Dorsolateral prefrontal cortex (tissue), 120 donors: ENCODE measurements at regions of chr13 and their contacts with region 1.

Region 1: GRCh38 chr13:49996951-49997895 is at the start of gene TRIM13:
- DNase-seq: peak; percentile 84 to 93 (median 90)
- H3K4me3 ChIP-seq: peak within 1 kb of the TSS; percentile 69 to 98 (median 87)
- H3K27ac ChIP-seq: peak within 1 kb of the TSS; percentile 91 to 100 (median 99)
- H3K27me3 ChIP-seq: no peaks in the 10 kb centered on the region
- CTCF ChIP-seq: peak; percentile 51 to 92 (median 82)
- total RNA-seq, gene TRIM13: 17.3 to 34.5 (median 23.6) TPM

Region 2: GRCh38 chr13:49733181-49733951 is 263.9 kb before region 1 on chr13:
- intact Hi-C with region 1: no loop called
- DNase-seq: no peak
- H3K4me3 ChIP-seq: no peak overlapping the region
- H3K27ac ChIP-seq: no peak overlapping the region
- H3K27me3 ChIP-seq: no peaks in the 10 kb centered on the region
- CTCF ChIP-seq: no peak

Region 3: DNA sequence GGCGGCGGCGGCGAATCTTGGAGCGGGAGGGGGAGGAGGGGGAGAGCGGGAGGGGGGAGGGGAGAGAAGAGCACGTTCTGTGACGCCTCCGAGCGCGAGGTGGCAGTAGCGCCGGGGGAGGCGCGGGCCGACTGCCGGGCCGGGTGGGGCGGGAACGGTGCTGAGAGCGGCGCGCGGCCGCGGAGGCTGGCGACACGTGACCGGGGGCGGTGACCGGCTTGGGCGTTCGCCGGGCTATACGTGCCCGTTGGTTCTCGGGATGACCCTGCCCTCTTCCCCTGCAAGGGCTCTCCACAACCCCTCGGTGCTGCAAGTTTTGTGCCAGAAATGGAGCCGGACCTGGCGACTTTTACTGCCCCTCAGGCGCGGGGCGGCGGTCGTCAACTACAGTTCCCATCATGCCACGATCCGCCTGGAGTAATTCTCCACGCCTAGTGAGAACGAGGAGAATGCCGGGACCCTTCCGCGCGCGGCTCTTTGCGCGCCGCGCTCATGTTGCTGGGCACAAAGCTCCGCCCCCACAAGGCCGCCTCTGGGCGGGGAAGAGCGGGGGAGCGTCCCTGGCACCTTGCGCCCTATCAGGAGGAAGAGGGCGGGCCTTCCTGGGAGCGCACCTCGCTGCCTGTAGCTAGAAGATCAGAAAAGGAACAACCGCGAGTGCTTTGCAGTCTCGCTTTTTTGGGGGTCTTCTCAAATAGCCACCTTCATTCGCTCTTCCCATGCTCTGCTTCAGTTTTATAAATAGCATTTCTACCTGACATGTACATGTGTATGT is 204.5 kb before region 1 on chr13 and contains the start of gene KPNA3:
- intact Hi-C with region 1: loop called in 1 of 2 experiments (anchors 10 kb)
- DNase-seq: peak; percentile 90 to 98 (median 96)
- H3K4me3 ChIP-seq: peak within 1 kb of the TSS; percentile 70 to 99 (median 86)
- H3K27ac ChIP-seq: peak within 1 kb of the TSS; percentile 80 to 98 (median 95)
- H3K27me3 ChIP-seq: no peaks in the 10 kb centered on the region
- CTCF ChIP-seq: peak in 49 of 56 donors; percentile 15 to 64 (median 41)
- total RNA-seq, gene KPNA3: 25.3 to 46.1 (median 35.7) TPM

Region 4: DNA sequence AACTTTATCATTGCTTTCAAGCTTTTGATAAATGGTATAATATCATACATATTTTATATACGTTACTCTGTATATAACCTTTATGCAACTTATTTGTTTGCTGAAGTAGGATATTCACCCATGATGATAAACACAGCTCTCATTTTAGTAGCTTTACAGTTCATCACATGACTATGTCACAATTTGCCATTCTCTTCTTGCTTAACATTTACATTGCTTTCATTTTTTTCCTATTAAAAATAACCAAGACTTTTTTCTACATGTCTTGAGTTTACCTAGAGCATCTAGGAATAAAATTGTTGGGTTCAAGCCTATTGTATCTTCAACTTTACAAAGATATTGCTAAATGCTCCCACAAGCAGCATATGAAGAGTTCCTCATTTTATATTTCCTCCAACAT is 72.0 kb after region 1 on chr13:
- intact Hi-C with region 1: loop called in 1 of 2 experiments (anchors 5 kb)
- DNase-seq: no peak
- H3K4me3 ChIP-seq: no peak overlapping the region
- H3K27ac ChIP-seq: peak overlapping the region in 8 of 59 donors; percentile 0 to 50 (median 33)
- H3K27me3 ChIP-seq: no peaks in the 10 kb centered on the region
- CTCF ChIP-seq: no peak

Region 5: DNA sequence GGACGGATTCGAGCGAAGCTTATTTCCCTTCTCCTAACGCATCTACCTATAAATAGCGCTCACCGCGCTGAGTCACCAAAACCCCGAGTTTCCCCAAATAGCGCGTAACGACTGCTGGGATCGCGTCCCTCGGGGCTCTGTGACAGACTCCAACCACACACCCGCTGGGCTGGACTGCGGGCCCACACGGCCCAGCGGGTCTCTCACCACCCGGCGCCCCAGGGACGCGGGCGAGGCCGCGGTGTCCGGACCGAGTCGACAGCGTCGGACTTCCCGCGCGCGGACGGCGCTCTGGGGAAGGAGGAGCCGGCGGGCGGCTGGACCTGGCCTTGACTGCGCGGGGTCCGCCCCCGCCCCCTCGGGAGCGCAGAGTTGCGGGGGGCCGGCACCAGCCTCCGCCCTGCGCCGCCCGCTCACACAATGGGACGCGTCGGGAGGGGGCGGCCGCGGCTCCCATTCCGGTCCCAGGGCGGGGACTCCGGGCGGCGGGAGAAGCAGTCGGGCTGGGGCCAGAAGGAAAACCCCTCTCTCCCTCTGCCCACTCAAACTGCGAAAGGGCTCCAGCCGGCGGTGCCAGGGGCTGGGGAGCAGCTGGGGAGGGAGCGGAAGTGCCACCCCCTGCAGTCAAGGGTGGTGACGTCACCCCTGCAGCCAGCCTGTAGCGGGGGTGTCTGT is 126.8 kb after region 1 on chr13:
- intact Hi-C with region 1: loop called (anchors 1 kb)
- DNase-seq: peak in 9 of 10 donors; percentile 56 to 94 (median 72)
- H3K4me3 ChIP-seq: peak overlapping the region; percentile 66 to 99 (median 96)
- H3K27ac ChIP-seq: peak overlapping the region; percentile 95 to 100 (median 100)
- H3K27me3 ChIP-seq: peaks cover 0 to 11% (median 0%) of the 10 kb centered on the region in 45 donors
- CTCF ChIP-seq: peak in 25 of 56 donors; percentile 0 to 49 (median 20)

Region 6: GRCh38 chr13:50521831-50522149 is 524.6 kb after region 1 on chr13:
- intact Hi-C with region 1: loop called (anchors 5 kb)
- DNase-seq: no peak
- H3K4me3 ChIP-seq: no peak overlapping the region
- H3K27ac ChIP-seq: peak overlapping the region in 6 of 59 donors; percentile 0 to 59 (median 14)
- H3K27me3 ChIP-seq: no peaks in the 10 kb centered on the region
- CTCF ChIP-seq: no peak

Region 7: GRCh38 chr13:50676602-50677001 is 679.4 kb after region 1 on chr13:
- intact Hi-C with region 1: loop called in 1 of 2 experiments (anchors 5 kb)
- DNase-seq: no peak
- H3K4me3 ChIP-seq: no peak overlapping the region
- H3K27ac ChIP-seq: peak overlapping the region in 24 of 59 donors; percentile 50 to 92 (median 84)
- H3K27me3 ChIP-seq: no peaks in the 10 kb centered on the region
- CTCF ChIP-seq: no peak